ENCODE measurements at regions of chr11 and their contacts with region 1.

Region 1: DNA sequence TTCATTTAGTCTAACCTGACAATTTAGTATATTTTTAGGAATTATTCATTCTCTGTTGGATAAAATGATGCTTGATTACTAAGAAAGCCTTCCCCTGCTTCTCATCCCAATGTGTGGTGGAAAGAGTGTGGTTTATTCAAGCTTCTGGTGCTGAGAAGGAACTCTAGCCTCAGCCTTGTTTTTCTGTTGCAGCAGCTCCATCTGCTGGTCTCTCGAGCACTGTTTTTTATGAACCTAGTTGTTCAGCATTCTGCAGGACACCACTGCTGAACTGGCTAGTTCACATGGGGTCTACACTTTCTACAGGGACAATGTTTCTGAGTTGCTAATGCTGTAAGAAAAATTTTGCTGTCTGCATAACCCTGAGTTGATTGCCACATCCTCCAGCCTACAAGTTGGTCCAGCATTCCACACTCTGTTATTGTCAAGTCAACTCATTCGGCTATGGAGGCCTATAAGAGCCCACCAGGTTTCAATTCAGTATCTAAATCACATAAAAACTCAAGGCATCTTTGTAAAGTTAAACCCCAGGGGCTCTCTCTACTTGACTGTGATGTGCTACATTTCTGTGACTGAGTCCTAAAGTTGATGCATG is 14.3 kb downstream of the OR2AG2 start:
- DNase-seq: peak; percentile 31
- H3K4me3 ChIP-seq: no peak overlapping the region
- H3K27ac ChIP-seq: no peak overlapping the region
- H3K4me1 ChIP-seq: no peaks in the 10 kb centered on the region
- H3K27me3 ChIP-seq: no peaks in the 10 kb centered on the region
- CTCF ChIP-seq: peak; percentile 45 to 70

Region 2: GRCh38 chr11:6705905-6706535 is 51.5 kb before region 1 on chr11:
- CTCF ChIA-PET with region 1: interaction called, 3 read pairs
- dilution Hi-C with region 1: no loop called
- in situ Hi-C with region 1: no loop called
- intact Hi-C with region 1: loop called (anchors 2 kb)
- DNase-seq: peak; percentile 21
- H3K4me3 ChIP-seq: no peak overlapping the region
- H3K27ac ChIP-seq: no peak overlapping the region
- H3K4me1 ChIP-seq: no peaks in the 10 kb centered on the region
- H3K27me3 ChIP-seq: no peaks in the 10 kb centered on the region
- CTCF ChIP-seq: peak; percentile 80 to 91

Region 3: GRCh38 chr11:6737872-6738466 is 19.5 kb before region 1 on chr11:
- CTCF ChIA-PET with region 1: interaction called, 3 read pairs
- dilution Hi-C with region 1: no loop called
- in situ Hi-C with region 1: no loop called
- intact Hi-C with region 1: loop called (anchors 1 kb)
- DNase-seq: peak; percentile 53
- H3K4me3 ChIP-seq: no peak overlapping the region
- H3K27ac ChIP-seq: no peak overlapping the region
- H3K4me1 ChIP-seq: no peaks in the 10 kb centered on the region
- H3K27me3 ChIP-seq: no peaks in the 10 kb centered on the region
- CTCF ChIP-seq: peak; percentile 70 to 74

Region 4: GRCh38 chr11:6943131-6943530 is 185.7 kb after region 1 on chr11:
- CTCF ChIA-PET with region 1: no interaction called
- dilution Hi-C with region 1: no loop called
- in situ Hi-C with region 1: no loop called
- intact Hi-C with region 1: no loop called
- DNase-seq: no peak
- H3K4me3 ChIP-seq: no peak overlapping the region
- H3K27ac ChIP-seq: no peak overlapping the region
- H3K4me1 ChIP-seq: no peaks in the 10 kb centered on the region
- H3K27me3 ChIP-seq: no peaks in the 10 kb centered on the region
- CTCF ChIP-seq: no peak